Common myeloid progenitor, CD34-positive (primary cell): ENCODE measurements at regions of chr4 and their contacts with region 1.

Region 1: DNA sequence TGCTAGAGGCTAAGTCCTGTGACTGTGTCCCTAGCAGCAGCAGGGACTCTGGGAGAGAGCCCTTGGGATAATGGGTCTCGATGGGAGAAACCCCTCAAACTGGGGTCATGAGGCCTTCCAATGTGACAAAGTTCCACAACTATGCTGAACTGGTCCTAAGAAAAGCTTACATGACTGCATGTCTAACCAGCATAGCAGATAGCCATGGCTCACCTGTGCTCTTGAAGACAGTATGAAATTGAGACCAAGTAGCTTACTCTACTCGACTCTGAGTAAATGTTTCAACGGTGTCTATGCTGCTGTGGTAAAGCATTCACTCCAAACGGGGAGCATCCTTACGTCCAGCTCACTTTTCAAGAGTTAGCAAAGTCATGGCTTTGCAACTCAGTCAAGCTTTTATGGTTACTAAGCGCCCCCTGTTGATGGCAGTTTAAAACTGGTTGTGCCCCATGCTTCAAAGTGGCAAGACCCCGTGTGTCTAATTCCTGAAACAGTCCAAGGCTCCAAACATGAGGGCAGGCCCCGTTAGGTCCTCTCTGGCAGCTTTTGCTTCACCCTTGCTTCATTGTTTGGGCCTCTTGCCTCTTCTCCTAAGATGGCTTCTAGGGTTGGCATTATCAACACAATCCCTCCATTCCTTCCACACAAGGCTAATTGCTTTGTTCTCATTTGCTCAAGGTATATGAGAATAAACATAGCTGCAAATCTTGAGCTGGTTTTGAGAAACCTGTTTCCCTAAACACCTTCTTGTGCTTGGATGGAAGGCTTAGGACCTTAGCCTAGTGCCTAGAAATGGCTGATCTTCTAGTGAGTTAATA is 46.6 kb downstream of the CCNG2 start:
- DNase-seq: peak; percentile 81 to 92 (median 89)
- H3K4me3 ChIP-seq: no peak overlapping the region
- H3K27ac ChIP-seq: no peak overlapping the region
- H3K4me1 ChIP-seq: peaks cover 0 to 2% (median 0%) of the 10 kb centered on the region in 4 experiments
- H3K27me3 ChIP-seq: no peaks in the 10 kb centered on the region

Region 2: DNA sequence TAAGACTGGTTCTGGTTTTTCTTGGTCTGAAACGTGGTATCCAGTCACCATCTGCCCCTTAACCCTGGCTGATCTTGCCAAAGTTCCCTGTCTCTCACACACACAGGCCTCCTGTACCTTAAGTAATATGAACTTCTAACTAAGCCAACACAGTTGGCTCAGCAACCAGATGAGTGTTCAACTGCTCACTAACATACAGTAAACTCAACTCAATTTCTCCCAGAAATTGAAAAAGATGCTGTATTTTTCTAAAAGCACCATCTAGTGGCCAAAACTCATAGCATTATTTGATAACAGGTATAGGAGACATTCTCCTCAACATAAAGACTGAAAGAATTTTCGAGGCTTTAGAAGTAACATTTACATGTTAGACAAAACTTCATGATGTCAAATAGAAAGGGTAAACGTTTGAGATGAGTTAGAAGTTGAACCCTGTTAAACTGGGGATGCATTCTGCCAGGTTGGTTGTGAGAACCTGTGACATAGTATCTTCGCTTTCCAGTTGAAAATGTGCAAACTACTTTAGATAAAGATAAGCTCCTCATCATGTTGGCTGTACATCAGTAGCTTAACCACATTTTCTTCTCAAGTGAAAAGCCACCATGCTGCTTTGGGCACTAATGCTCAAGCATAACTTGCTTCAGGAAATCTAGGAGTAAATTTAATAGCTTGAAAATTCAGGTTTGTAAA is 159.0 kb before region 1 on chr4:
- CTCF ChIA-PET with region 1: interaction called, 364 read pairs
- POLR2A ChIA-PET with region 1: interaction called, 3 read pairs
- DNase-seq: peak; percentile 38 to 69 (median 61)
- H3K4me3 ChIP-seq: no peak overlapping the region
- H3K27ac ChIP-seq: no peak overlapping the region
- H3K4me1 ChIP-seq: peaks cover 0 to 5% (median 2%) of the 10 kb centered on the region in 4 experiments
- H3K27me3 ChIP-seq: no peaks in the 10 kb centered on the region

Region 3: DNA sequence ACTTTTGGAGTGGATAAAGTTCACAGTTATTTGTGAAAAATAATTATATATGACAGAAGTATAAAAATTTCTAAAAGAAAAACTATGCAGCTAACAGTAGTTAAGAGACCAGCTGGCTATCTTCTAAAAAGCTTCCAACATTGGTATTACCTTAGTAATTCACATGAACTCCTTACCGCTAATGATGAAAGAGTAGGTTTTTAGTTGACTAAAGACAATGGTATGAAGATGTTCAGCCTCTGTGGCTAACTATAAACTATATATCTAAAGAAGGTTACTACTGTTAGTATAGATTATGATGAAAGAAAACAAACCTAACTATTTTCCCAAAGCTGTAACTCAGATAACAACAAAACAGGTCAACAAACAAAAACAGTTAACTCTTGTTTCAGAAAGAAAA is 138.2 kb before region 1 on chr4:
- CTCF ChIA-PET with region 1: interaction called, 21 read pairs
- POLR2A ChIA-PET with region 1: no interaction called
- DNase-seq: no peak
- H3K4me3 ChIP-seq: no peak overlapping the region
- H3K27ac ChIP-seq: no peak overlapping the region
- H3K4me1 ChIP-seq: peaks cover 0 to 3% (median 1%) of the 10 kb centered on the region in 4 experiments
- H3K27me3 ChIP-seq: no peaks in the 10 kb centered on the region

Region 4: GRCh38 chr4:77095101-77095821 is 108.3 kb before region 1 on chr4:
- CTCF ChIA-PET with region 1: interaction called, 155 read pairs
- POLR2A ChIA-PET with region 1: no interaction called
- DNase-seq: peak; percentile 68 to 73 (median 73)
- H3K4me3 ChIP-seq: no peak overlapping the region
- H3K27ac ChIP-seq: no peak overlapping the region
- H3K4me1 ChIP-seq: peaks cover 10 to 34% (median 30%) of the 10 kb centered on the region in 4 experiments
- H3K27me3 ChIP-seq: no peaks in the 10 kb centered on the region

Region 5: GRCh38 chr4:77126809-77127208 is 76.8 kb before region 1 on chr4:
- CTCF ChIA-PET with region 1: interaction called, 31 read pairs
- POLR2A ChIA-PET with region 1: no interaction called
- DNase-seq: peak; percentile 55 to 94 (median 90)
- H3K4me3 ChIP-seq: no peak overlapping the region
- H3K27ac ChIP-seq: no peak overlapping the region
- H3K4me1 ChIP-seq: peaks cover 7 to 29% (median 17%) of the 10 kb centered on the region in 4 experiments
- H3K27me3 ChIP-seq: no peaks in the 10 kb centered on the region

Region 6: GRCh38 chr4:77156533-77156911 is 47.1 kb before region 1 on chr4:
- CTCF ChIA-PET with region 1: interaction called, 33 read pairs
- POLR2A ChIA-PET with region 1: no interaction called
- DNase-seq: peak; percentile 100
- H3K4me3 ChIP-seq: peak overlapping the region; percentile 72 to 99 (median 96)
- H3K27ac ChIP-seq: peak overlapping the region; percentile 94 to 97
- H3K4me1 ChIP-seq: peaks cover 32 to 55% (median 41%) of the 10 kb centered on the region in 4 experiments
- H3K27me3 ChIP-seq: no peaks in the 10 kb centered on the region